Activated CD8-positive, alpha-beta T cell treated with anti-CD3 and anti-CD28 coated beads, Interleukin-2, amount 10 ng/mL, durations not matched to agents 7 days and 5 days (primary cell): ENCODE measurements at regions of chr22 and their contacts with region 1.

Region 1: DNA sequence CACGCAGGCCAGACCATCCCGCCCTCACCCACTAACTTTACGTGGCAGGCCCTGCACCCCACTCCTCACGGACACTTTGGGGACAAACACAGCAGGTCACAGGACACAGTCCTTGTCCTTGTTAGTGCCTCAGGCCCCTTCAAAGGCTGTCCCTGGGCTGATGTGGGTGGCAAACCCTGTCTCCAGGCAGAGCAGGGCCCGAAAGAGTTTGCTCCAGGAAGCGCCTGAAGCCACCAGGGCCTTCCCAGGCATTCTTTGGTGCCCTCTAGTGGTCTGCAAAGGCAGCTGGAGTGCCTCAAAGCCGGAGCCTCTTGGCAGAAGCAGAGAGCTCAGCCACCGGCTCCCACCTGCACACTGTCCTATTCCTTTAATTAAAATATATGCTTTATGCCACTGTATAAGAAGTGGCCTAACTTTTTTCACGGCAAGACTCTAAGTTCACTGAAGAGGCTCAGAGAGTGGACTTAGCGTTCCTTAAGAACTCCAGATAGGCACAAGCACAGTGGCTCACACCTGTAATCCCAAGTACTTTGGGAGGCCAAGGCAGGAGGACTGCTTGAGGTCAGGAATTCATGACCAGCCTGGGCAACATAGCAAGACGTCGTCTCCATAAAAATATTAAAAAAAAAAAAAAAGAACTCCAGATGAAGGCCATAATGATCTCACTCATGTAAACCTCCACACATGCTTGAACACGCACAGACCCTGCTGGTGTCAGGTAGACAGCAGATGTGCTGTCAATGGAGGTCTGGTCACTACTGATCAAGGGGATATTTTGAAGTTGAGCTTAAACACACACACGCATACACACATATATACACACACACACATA is 11.1 kb downstream of the TXN2 start:
- DNase-seq: peak; percentile 90
- ATAC-seq: peak; percentile 96
- H3K4me3 Mint-ChIP-seq: no peak overlapping the region
- H3K27ac Mint-ChIP-seq: peak overlapping the region; percentile 77
- H3K4me1 Mint-ChIP-seq: peaks cover 41% of the 10 kb centered on the region
- H3K27me3 Mint-ChIP-seq: no peaks in the 10 kb centered on the region

Region 2: DNA sequence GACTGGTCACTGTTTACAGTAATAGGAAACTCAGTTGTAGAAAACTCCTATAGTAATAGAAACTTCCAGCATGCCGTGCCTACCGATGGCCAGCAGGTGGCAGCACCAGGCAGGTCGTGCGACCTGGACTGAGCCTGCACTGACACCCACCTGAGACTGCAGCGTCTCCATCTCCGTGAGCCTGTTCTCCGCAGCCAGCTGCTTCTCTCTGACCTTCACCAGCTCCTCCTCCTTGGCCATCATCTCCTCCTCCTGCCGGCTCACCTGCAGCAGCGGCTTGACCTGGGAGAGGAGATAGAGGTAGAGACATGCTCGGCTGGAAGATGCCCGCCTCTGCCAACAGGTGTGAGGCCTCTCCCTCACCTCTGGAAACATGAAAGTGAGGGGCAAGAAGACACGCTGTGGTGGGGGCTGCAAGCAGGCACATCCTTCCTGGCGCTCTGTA is 169.0 kb before region 1 on chr22:
- CTCF ChIA-PET with region 1: interaction called, 60 read pairs
- POLR2A ChIA-PET with region 1: no interaction called
- DNase-seq: peak; percentile 87
- ATAC-seq: peak; percentile 84
- H3K4me3 Mint-ChIP-seq: no peak overlapping the region
- H3K27ac Mint-ChIP-seq: peak overlapping the region; percentile 29
- H3K4me1 Mint-ChIP-seq: peaks cover 12% of the 10 kb centered on the region
- H3K27me3 Mint-ChIP-seq: no peaks in the 10 kb centered on the region

Region 3: GRCh38 chr22:36331306-36331911 is 139.0 kb before region 1 on chr22:
- CTCF ChIA-PET with region 1: interaction called, 25 read pairs
- POLR2A ChIA-PET with region 1: interaction called, 3 read pairs
- DNase-seq: peak; percentile 91
- ATAC-seq: peak; percentile 59
- H3K4me3 Mint-ChIP-seq: peak overlapping the region; percentile 85
- H3K27ac Mint-ChIP-seq: peak overlapping the region; percentile 99
- H3K4me1 Mint-ChIP-seq: peaks cover 99% of the 10 kb centered on the region
- H3K27me3 Mint-ChIP-seq: no peaks in the 10 kb centered on the region

Region 4: GRCh38 chr22:36352803-36353507 is 117.4 kb before region 1 on chr22:
- CTCF ChIA-PET with region 1: interaction called, 12 read pairs
- POLR2A ChIA-PET with region 1: interaction called, 3 read pairs
- DNase-seq: peak; percentile 74
- ATAC-seq: peak; percentile 31
- H3K4me3 Mint-ChIP-seq: peak overlapping the region; percentile 36
- H3K27ac Mint-ChIP-seq: peak overlapping the region; percentile 86
- H3K4me1 Mint-ChIP-seq: peaks cover 87% of the 10 kb centered on the region
- H3K27me3 Mint-ChIP-seq: no peaks in the 10 kb centered on the region

Region 5: DNA sequence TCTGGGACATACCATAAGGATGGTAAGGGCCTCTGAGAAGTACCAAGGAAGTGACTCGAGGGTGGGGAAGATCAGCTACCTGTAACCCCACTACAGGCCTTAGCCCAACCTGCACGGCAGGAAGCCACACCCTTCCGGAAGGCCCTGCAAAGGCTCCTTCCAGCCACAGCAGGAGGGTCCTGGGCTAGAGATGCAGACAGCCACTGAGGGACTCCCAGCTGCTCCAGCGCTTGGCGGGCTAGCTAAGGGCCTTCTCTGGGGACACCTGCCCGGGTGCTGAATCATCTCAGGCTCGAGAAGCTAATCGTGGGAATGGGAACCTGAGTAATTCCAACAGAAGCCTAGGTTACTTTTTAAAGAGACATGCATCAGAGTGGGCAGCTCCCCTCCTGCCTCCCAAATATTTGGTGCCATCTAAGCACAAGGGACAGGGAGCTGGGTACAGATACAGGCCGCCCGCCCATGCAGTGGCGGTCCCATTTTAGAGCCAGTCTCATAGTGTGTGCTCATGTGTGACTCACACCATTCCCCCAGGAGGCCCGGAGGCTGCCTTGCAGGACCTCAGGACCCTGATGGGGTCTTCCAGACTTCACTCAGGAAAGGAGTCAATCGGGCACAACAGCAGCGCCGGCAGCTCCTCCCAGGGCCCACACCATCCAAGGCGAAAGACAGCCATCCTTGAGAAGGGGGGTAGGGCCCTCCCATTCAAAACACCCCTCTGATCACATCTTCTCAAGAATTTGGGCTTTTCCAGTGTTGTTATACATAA is 90.6 kb before region 1 on chr22:
- CTCF ChIA-PET with region 1: interaction called, 17 read pairs
- POLR2A ChIA-PET with region 1: interaction called, 3 read pairs
- DNase-seq: peak; percentile 80
- ATAC-seq: peak; percentile 61
- H3K4me3 Mint-ChIP-seq: peak overlapping the region; percentile 78
- H3K27ac Mint-ChIP-seq: peak overlapping the region; percentile 98
- H3K4me1 Mint-ChIP-seq: peaks cover 93% of the 10 kb centered on the region
- H3K27me3 Mint-ChIP-seq: no peaks in the 10 kb centered on the region

Region 6: GRCh38 chr22:36405671-36406538 is 64.5 kb before region 1 on chr22:
- CTCF ChIA-PET with region 1: interaction called, 20 read pairs
- POLR2A ChIA-PET with region 1: interaction called, 4 read pairs
- DNase-seq: peak; percentile 77
- ATAC-seq: peak; percentile 72
- H3K4me3 Mint-ChIP-seq: peak overlapping the region; percentile 40
- H3K27ac Mint-ChIP-seq: peak overlapping the region; percentile 93
- H3K4me1 Mint-ChIP-seq: peaks cover 51% of the 10 kb centered on the region
- H3K27me3 Mint-ChIP-seq: no peaks in the 10 kb centered on the region

Region 7: GRCh38 chr22:36481393-36482168 is 11.2 kb after region 1 on chr22 and contains the start of gene TXN2:
- CTCF ChIA-PET with region 1: interaction called, 13 read pairs
- POLR2A ChIA-PET with region 1: interaction called, 5 read pairs
- DNase-seq: peak; percentile 97
- ATAC-seq: peak; percentile 93
- H3K4me3 Mint-ChIP-seq: peak within 1 kb of the TSS; percentile 97
- H3K27ac Mint-ChIP-seq: peak within 1 kb of the TSS; percentile 96
- H3K4me1 Mint-ChIP-seq: peaks cover 22% of the 10 kb centered on the region
- H3K27me3 Mint-ChIP-seq: no peaks in the 10 kb centered on the region
- total RNA-seq, gene TXN2: 74.1 to 78.4 TPM